K562 (cell line): ENCODE measurements at regions of chr10 and their contacts with region 1.

Region 1: GRCh38 chr10:71569775-71570588 is 149.6 kb downstream of the C10orf105 start:
- DNase-seq: peak; percentile 85 to 92 (median 88)
- ATAC-seq: peak; percentile 84
- H3K4me3 ChIP-seq: no peak overlapping the region
- H3K27ac ChIP-seq: no peak overlapping the region
- H3K4me1 ChIP-seq: peaks cover 0 to 19% of the 10 kb centered on the region in 2 experiments; a peak in 2 of 5 replicates
- H3K27me3 ChIP-seq: peaks cover 0 to 5% of the 10 kb centered on the region in 2 experiments; a peak in 3 of 5 replicates
- CTCF ChIP-seq: peak; percentile 88 to 93 (median 92)
- EP300 ChIP-seq: no peak
- POLR2A ChIP-seq: no peak
- RAD21 ChIP-seq: peak; percentile 87

Region 2: DNA sequence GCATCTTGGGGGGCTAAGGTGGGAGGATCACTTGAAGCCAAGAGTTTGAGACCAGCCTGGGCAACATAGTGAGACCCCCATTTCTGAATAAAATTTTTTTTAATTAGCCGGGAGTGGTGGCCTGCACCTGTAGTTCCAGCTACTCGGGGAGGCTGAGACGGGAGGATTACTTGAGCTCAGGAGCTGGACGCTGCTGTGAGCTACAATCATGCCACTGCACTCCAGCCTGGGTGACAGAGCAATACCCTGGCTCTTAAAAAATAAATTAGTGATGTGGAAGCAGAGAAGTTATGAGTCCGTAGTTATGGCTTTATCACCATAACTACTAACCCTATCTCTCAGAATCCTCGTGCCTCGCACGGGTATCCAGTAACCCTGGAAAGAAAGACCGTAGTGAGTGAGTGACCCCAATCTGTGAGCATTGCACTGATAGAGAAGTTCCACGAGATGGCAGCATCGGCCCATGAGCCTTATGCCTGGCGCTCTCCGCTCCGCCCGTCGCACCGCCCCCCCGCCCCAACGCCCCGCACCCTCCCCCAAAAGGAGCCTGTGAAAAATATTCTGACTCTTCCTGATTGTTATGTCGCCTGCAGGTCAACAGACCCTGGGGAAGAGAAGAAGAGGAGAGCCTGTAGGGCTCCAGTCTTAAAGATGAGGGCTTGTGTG is 255.8 kb before region 1 on chr10:
- CTCF ChIA-PET with region 1: interaction called, 18 read pairs
- POLR2A ChIA-PET with region 1: no interaction called
- in situ Hi-C with region 1: loop called (anchors 5 kb)
- intact Hi-C with region 1: loop called (anchors 2 kb)
- DNase-seq: peak; percentile 79 to 91 (median 90)
- ATAC-seq: peak; percentile 73
- H3K4me3 ChIP-seq: no peak overlapping the region
- H3K27ac ChIP-seq: no peak overlapping the region
- H3K4me1 ChIP-seq: peaks cover 8 to 9% of the 10 kb centered on the region in 2 experiments; a peak in 4 of 5 replicates
- H3K27me3 ChIP-seq: peaks cover 0 to 10% of the 10 kb centered on the region in 2 experiments; a peak in 2 of 5 replicates
- CTCF ChIP-seq: peak; percentile 68 to 82 (median 76)
- EP300 ChIP-seq: no peak
- POLR2A ChIP-seq: no peak
- RAD21 ChIP-seq: peak; percentile 64 to 78

Region 3: GRCh38 chr10:71319042-71319799 is 250.8 kb before region 1 on chr10 and contains the start of gene SLC29A3:
- CTCF ChIA-PET with region 1: interaction called, 18 read pairs
- POLR2A ChIA-PET with region 1: no interaction called
- in situ Hi-C with region 1: loop called (anchors 5 kb)
- intact Hi-C with region 1: loop called (anchors 2 kb)
- DNase-seq: peak; percentile 92 to 96 (median 94)
- ATAC-seq: peak; percentile 96
- H3K4me3 ChIP-seq: peak within 1 kb of the TSS; percentile 75
- H3K27ac ChIP-seq: peak within 1 kb of the TSS; percentile 62
- H3K4me1 ChIP-seq: peaks cover 10 to 23% of the 10 kb centered on the region in 2 experiments; a peak in 4 of 5 replicates
- H3K27me3 ChIP-seq: no peaks in the 10 kb centered on the region
- CTCF ChIP-seq: peak; percentile 90 to 96 (median 94)
- EP300 ChIP-seq: no peak
- POLR2A ChIP-seq: peak; percentile 80
- RAD21 ChIP-seq: peak; percentile 84 to 91
- polyA plus RNA-seq, gene SLC29A3: 6.3 to 10.3 TPM

Region 4: DNA sequence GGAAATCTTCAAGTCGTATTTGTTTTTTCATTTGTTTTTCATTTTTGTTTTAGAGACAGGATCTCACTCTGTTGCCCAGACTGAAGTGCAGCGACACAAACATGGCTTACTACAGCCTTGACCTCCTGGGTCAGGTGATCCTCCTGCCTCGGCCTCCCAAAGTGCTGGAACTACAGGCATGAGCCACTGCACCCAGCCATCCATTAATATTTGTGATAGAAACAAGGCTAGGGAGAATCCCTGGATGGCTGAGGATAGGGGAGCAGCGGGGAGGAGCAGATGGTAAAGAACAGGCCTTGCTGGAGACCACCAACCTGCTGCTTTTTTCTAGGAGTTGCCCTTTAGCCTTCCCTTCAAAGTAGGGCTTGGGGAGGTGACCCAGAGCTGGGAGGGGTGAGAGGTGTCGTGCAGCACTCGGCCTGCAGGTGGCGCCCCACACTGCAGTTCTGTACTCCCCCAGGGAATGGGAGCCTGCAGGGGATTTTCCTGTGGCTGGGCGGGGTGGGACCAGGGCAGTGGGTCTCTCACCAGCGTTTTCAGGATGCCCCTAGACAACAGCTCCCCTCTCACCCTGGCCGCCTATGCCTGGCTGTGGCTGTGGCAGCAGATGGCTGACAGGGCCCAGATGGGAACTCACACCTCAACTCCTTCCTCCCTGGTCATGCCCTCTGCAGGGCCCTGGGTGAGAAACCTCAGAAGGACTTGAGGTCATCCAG is 185.9 kb before region 1 on chr10:
- CTCF ChIA-PET with region 1: interaction called, 10 read pairs
- POLR2A ChIA-PET with region 1: no interaction called
- in situ Hi-C with region 1: no loop called
- intact Hi-C with region 1: loop called (anchors 1 kb)
- DNase-seq: peak; percentile 86 to 92 (median 90)
- ATAC-seq: peak; percentile 98
- H3K4me3 ChIP-seq: no peak overlapping the region
- H3K27ac ChIP-seq: no peak overlapping the region
- H3K4me1 ChIP-seq: peaks cover 3 to 9% of the 10 kb centered on the region in 2 experiments; a peak in 3 of 5 replicates
- H3K27me3 ChIP-seq: peaks cover 5 to 10% of the 10 kb centered on the region in 2 experiments
- CTCF ChIP-seq: peak; percentile 95 to 98 (median 95)
- EP300 ChIP-seq: no peak
- POLR2A ChIP-seq: no peak
- RAD21 ChIP-seq: peak; percentile 82 to 92

Region 5: GRCh38 chr10:71396084-71396720 is 173.8 kb before region 1 on chr10:
- CTCF ChIA-PET with region 1: no interaction called
- POLR2A ChIA-PET with region 1: no interaction called
- in situ Hi-C with region 1: no loop called
- intact Hi-C with region 1: loop called (anchors 5 kb)
- DNase-seq: peak; percentile 57 to 63 (median 59)
- ATAC-seq: peak; percentile 92
- H3K4me3 ChIP-seq: no peak overlapping the region
- H3K27ac ChIP-seq: no peak overlapping the region
- H3K4me1 ChIP-seq: peaks cover 0 to 20% of the 10 kb centered on the region in 2 experiments; a peak in 2 of 5 replicates
- H3K27me3 ChIP-seq: peaks cover 64 to 91% of the 10 kb centered on the region in 2 experiments
- CTCF ChIP-seq: peak; percentile 62 to 73 (median 71)
- EP300 ChIP-seq: no peak
- POLR2A ChIP-seq: no peak
- RAD21 ChIP-seq: peak; percentile 61 to 80

Region 6: DNA sequence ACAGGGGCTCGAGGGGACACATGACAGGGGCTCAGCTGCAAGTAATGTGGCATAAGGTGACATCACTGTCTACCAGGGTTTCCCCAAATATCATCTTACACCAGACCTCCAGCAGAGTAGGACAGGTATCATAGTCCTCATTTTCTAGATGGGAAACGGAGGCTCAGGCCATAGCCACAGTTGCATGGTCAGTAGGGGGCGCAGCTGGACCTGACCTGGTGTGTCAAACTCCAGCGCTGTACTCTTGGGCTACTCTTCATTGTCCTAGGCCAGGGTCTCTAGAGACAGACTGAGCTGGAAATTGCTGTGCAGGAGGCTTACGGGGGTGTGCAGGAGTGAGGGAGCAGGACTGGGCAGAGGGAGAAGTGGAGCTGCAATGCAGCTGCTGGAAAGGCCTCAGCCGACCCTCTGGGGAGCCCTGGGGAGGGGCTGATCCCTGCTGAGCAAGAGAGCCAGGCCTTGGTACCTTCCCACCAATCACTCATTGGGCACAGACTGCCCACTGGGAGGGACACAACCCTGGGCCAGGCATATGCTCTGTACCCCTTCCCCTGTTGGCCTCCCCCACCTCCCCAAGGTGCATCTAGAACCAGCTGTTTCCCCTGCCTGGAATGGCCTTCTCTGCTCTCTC is 83.4 kb before region 1 on chr10:
- CTCF ChIA-PET with region 1: interaction called, 6 read pairs
- POLR2A ChIA-PET with region 1: no interaction called
- in situ Hi-C with region 1: no loop called
- intact Hi-C with region 1: loop called (anchors 1 kb)
- DNase-seq: peak; percentile 66 to 82 (median 73)
- ATAC-seq: peak; percentile 98
- H3K4me3 ChIP-seq: no peak overlapping the region
- H3K27ac ChIP-seq: no peak overlapping the region
- H3K4me1 ChIP-seq: no peaks in the 10 kb centered on the region
- H3K27me3 ChIP-seq: peaks cover 24 to 39% of the 10 kb centered on the region in 2 experiments; a peak in 4 of 5 replicates
- CTCF ChIP-seq: peak; percentile 85 to 93 (median 91)
- EP300 ChIP-seq: no peak
- POLR2A ChIP-seq: no peak
- RAD21 ChIP-seq: peak; percentile 51 to 87

Region 7: GRCh38 chr10:71868192-71868697 is 298.3 kb after region 1 on chr10:
- CTCF ChIA-PET with region 1: no interaction called
- POLR2A ChIA-PET with region 1: no interaction called
- in situ Hi-C with region 1: no loop called
- intact Hi-C with region 1: no loop called
- DNase-seq: peak; percentile 37 to 82 (median 52)
- ATAC-seq: peak; percentile 82
- H3K4me3 ChIP-seq: no peak overlapping the region
- H3K27ac ChIP-seq: peak overlapping the region; percentile 55; the same call in 2 of the 3 replicates
- H3K4me1 ChIP-seq: peaks cover 13 to 27% of the 10 kb centered on the region in 2 experiments
- H3K27me3 ChIP-seq: no peaks in the 10 kb centered on the region
- CTCF ChIP-seq: no peak
- EP300 ChIP-seq: 0 out of 2 replicates have a peak, but pooled peaks have one; percentile 27
- POLR2A ChIP-seq: no peak
- RAD21 ChIP-seq: no peak

Region 8: DNA sequence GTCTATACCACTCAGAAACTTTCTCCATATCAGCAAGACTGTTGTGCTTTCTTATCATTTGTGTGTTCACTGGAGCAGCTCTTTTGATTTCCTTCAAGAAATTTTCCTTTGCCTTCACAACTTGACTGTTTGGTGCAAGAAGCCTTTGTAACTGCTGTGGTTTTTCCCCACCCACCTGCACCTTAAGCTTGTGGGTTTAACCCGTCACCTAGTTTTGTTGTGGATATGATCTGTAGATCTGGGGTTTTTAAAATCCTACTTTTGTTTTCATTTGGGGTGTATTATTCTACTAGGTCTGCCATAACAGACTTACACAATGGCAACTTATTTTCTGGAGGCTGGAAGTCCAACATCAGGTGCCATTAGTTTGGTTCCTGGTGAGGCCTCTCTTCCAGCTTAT is 363.7 kb after region 1 on chr10:
- CTCF ChIA-PET with region 1: no interaction called
- POLR2A ChIA-PET with region 1: no interaction called
- in situ Hi-C with region 1: no loop called
- intact Hi-C with region 1: no loop called
- DNase-seq: no peak
- ATAC-seq: no peak
- H3K4me3 ChIP-seq: no peak overlapping the region
- H3K27ac ChIP-seq: no peak overlapping the region
- H3K4me1 ChIP-seq: no peaks in the 10 kb centered on the region
- H3K27me3 ChIP-seq: peaks cover 9 to 26% of the 10 kb centered on the region in 2 experiments
- CTCF ChIP-seq: no peak
- EP300 ChIP-seq: no peak
- POLR2A ChIP-seq: no peak
- RAD21 ChIP-seq: no peak